Activated CD8-positive, alpha-beta T cell treated with anti-CD3 and anti-CD28 coated beads for 36 hours (primary cell): ENCODE measurements at regions of chr3 and their contacts with region 1.

Region 1: DNA sequence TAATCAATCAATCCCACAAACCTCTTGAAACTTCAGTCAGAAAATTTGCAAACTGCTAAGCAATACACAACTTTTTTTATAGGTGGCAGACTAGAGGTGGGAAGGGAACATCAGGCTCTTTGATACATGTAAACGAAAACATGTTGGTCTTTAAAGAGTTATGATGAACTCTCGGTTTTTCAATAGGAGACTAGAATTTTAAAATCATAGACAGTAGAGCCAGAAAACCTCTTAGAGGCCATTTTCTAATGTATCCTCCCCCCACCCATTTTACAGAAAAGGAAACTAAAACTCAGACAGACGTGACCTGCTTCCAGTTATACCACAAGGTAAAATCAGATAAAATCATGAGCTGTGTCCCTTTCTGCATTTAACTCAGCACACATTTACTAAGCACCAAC is 179.1 kb upstream of the LPP start:
- DNase-seq: no peak
- ATAC-seq: peak; percentile 48
- H3K4me3 Mint-ChIP-seq: peak overlapping the region; percentile 30
- H3K27ac Mint-ChIP-seq: peak overlapping the region; percentile 86
- H3K4me1 Mint-ChIP-seq: peaks cover 52% of the 10 kb centered on the region
- H3K27me3 Mint-ChIP-seq: no peaks in the 10 kb centered on the region
- CTCF ChIP-seq: no peak

Region 2: GRCh38 chr3:187694801-187695200 is 280.1 kb before region 1 on chr3:
- CTCF ChIA-PET with region 1: no interaction called
- POLR2A ChIA-PET with region 1: no interaction called
- intact Hi-C with region 1: no loop called
- DNase-seq: no peak
- ATAC-seq: no peak
- H3K4me3 Mint-ChIP-seq: no peak overlapping the region
- H3K27ac Mint-ChIP-seq: no peak overlapping the region
- H3K4me1 Mint-ChIP-seq: no peaks in the 10 kb centered on the region
- H3K27me3 Mint-ChIP-seq: peaks cover 18% of the 10 kb centered on the region
- CTCF ChIP-seq: no peak

Region 3: GRCh38 chr3:187802928-187803259 is 172.0 kb before region 1 on chr3:
- CTCF ChIA-PET with region 1: no interaction called
- POLR2A ChIA-PET with region 1: no interaction called
- intact Hi-C with region 1: loop called (anchors 5 kb)
- DNase-seq: peak; percentile 86
- ATAC-seq: peak; percentile 48
- H3K4me3 Mint-ChIP-seq: peak overlapping the region; percentile 52
- H3K27ac Mint-ChIP-seq: peak overlapping the region; percentile 92
- H3K4me1 Mint-ChIP-seq: peaks cover 93% of the 10 kb centered on the region
- H3K27me3 Mint-ChIP-seq: no peaks in the 10 kb centered on the region
- CTCF ChIP-seq: no peak

Region 4: DNA sequence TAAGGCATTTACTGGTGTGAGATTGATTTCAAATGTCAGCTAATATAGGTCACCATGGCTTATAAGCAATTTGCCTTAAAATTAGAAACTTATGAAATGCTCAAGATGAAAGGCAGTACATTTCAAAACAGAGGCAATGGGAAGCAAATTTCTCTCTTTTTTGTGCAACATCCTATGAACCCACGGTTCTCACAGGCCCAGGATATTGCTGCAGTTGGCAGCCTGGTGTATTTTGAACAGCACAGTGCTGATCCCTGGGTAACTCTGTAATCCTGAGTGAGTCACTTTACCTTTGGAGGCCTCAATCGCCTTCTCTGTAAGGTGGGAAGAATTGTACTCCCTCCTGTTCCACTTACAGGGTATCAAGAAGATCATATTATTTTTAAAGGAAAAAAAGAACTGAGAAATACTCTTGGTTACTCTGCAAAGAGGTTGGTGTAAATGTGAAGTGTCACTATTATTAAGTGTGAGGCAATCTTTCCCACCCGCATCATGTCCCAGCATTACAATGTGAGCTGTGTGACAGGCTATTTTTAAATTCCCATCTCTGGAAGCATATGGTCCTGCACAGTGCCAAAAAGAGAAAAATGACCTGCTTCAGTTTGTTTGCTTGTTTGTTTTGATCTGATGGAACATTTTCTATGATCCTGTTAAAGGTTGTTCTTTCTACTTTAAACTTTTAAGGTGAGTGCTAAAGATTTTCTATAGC is 11.0 kb before region 1 on chr3:
- CTCF ChIA-PET with region 1: interaction called, 17 read pairs
- POLR2A ChIA-PET with region 1: interaction called, 4 read pairs
- intact Hi-C with region 1: no loop called
- DNase-seq: no peak
- ATAC-seq: peak; percentile 32
- H3K4me3 Mint-ChIP-seq: no peak overlapping the region
- H3K27ac Mint-ChIP-seq: no peak overlapping the region
- H3K4me1 Mint-ChIP-seq: peaks cover 16% of the 10 kb centered on the region
- H3K27me3 Mint-ChIP-seq: no peaks in the 10 kb centered on the region
- CTCF ChIP-seq: no peak

Region 5: DNA sequence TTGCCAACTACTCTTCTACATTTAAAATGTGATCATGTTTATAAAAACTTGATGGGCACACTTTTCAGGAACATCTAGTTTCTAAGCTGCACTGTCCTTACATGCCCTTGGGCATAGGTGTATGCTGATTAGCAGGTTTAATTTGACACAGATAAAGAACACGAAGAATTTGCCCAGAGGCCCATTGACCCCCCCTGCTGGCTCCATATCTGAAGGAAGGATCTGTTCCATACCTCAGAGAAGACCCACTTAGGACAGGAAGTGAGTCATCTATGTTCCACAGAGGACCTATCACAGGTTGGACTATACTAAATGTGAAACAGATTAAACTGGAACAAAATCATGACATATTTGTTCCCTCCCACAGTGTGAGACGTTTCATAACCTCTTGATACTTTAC is 86.3 kb after region 1 on chr3:
- CTCF ChIA-PET with region 1: interaction called, 3 read pairs
- POLR2A ChIA-PET with region 1: no interaction called
- intact Hi-C with region 1: loop called (anchors 5 kb)
- DNase-seq: peak; percentile 87
- ATAC-seq: peak; percentile 98
- H3K4me3 Mint-ChIP-seq: no peak overlapping the region
- H3K27ac Mint-ChIP-seq: peak overlapping the region; percentile 87
- H3K4me1 Mint-ChIP-seq: peaks cover 38% of the 10 kb centered on the region
- H3K27me3 Mint-ChIP-seq: no peaks in the 10 kb centered on the region
- CTCF ChIP-seq: peak; percentile 25